Posterior cingulate gyrus (tissue), 11 donors: ENCODE measurements at regions of chr3 and their contacts with region 1.

Region 1: GRCh38 chr3:43162230-43163084 is 56.6 kb upstream of the POMGNT2 start:
- DNase-seq: peak in 1 of 10 donors; percentile 71

Region 2: DNA sequence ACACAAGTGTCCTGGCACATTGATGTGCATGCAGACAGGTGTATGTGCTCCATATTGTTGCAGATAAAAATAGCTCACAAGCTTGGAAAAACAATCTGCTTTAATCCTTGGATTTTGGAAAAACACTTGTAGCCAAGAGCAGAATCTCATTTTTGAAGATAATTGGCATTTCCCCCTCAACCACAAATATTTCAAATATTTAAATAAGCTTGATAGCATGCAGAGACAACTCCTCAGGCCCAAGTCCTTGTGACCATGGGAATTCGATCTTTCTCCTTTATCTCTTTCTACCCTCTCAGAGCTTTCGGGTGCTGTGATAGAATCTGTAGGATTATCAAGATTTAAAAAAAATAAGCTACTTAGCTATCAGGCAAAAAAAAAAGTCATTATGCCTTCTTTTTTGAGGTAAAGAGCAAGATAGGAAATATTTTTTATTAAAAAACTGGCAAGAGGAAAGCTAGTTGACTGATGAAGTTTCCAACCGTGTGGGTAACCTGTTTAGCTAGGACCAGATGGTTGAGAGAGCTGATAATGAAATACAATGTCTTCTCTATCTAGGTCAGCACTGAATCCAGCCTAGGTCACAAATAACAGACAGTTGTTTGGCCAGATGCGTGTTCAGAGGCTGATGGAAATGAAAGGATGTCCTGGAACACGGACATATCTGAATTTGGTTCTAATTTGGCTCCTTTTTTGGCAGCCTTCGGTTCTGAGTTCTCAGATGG is 69.0 kb after region 1 on chr3:
- intact Hi-C with region 1: no loop called
- DNase-seq: no peak

Region 3: GRCh38 chr3:43286115-43286840 is 123.8 kb after region 1 on chr3 and contains the start of gene SNRK:
- intact Hi-C with region 1: loop called (anchors 5 kb)
- DNase-seq: peak; percentile 88 to 99 (median 92)

Region 4: DNA sequence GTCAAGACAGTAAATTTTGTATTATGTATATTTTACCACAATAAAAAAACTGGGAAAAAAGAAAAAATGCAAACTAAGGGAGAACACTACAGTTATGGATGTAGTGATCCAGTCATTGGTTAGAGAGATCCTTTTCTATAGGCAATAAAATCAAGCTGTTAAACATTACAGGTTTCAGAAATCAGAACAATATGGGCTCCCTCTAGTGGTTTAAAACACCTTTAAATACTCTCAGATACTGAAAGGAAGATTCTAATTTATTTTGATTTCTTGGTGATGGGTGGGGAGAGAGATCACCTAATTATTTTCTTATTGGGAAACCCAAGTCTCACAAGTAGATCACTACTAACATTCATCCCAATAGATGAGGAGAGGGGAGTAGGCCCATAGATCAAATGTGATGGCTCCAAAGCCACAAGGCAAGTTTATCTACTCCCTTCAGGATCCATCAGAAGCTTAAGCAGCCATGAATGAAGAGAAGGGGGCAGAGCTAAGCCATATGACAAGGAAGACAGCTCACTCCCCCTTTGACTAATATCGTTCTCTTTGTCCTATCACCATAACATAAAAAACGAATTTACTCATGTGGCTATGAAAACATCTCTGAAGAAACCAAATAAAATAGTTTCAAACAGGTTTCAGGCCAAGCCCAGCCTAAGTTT is 340.7 kb after region 1 on chr3:
- intact Hi-C with region 1: loop called (anchors 1 kb)
- DNase-seq: no peak